Posterior cingulate gyrus (tissue), 11 donors: ENCODE measurements at regions of chr19 and their contacts with region 1.

Region 1: GRCh38 chr19:3324321-3324856 is 42.0 kb upstream of the NFIC start:
- DNase-seq: peak in 6 of 10 donors; percentile 26 to 86 (median 66)

Region 2: GRCh38 chr19:3094601-3095437 is 229.6 kb before region 1 on chr19:
- intact Hi-C with region 1: no loop called
- DNase-seq: peak in 1 of 10 donors; percentile 72

Region 3: DNA sequence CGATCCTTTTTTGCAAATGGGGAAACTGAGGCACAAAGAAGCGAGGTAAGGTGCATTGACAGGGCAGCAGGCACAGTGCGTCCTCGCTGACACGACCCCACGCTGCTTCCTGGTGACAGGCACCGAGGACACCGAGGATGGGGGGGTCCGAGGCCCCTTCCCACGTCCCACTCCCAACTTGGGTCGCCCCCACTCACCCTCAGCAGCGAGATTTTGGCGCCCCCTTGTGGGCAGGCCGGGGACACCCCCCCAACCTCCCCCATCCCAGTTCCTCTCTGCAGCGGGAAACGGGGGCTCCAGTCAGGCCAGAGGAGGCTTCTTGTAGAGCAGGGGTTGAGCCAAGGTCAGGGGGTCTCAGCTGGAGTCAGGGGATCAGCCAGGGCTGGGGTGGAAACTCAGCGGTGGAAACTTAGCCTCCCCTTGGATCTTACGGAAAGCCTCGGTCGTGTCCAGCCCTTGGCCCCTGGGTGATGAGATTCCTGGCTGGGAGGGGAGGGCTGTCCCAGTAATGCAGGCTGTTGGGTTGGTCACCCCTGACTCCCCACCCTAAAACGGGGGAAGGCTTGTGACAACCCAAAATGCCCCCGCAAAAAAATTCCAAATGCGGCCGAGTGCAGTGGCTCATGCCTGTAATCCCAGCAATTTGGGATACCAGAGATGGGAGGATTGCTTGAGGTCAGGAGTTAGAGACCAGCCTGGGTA is 147.7 kb after region 1 on chr19:
- intact Hi-C with region 1: loop called (anchors 1 kb)
- DNase-seq: peak in 5 of 10 donors; percentile 36 to 89 (median 53)

Region 4: DNA sequence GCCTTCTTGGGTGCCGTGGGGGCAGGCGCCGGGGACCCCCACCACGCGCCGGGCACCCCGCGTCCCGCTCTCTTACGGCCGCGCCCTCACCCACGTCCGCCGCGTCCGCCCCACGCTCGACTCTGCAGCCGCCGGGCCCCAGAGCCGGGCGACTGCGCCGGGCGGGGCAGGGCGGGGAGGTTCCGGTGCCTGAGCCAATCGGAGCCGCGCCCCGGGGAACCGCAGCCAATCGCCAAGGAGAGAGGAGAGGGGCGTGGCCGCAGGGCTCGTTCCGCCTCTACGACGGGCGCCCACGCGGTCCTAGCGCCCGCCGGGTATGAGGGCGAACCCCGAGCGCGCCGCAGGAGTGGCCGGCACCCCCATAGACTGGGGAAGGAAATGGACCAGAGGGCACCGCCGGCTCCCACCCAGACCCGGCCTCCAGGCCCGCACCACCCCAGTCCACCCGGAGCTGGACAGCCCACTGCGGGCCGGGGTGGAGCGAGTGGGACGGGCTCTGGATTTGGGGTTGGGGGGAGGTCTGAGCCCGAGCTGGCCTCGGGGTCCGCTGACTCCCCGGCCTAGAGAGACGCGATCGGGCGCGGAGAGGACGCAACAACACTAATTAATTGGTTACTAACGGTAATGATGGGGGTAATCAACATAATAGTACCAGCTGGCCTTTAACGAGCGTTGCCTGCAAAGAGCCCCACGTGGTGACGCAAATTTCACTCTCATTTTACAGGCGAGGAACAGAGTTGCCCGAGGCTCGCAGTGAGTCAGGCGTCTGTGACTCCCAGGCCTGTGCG is 233.3 kb after region 1 on chr19 and contains the start of gene MFSD12:
- intact Hi-C with region 1: no loop called
- DNase-seq: peak; percentile 90 to 99 (median 94)